ENCODE measurements at regions of chr2 and their contacts with region 1.

Region 1: DNA sequence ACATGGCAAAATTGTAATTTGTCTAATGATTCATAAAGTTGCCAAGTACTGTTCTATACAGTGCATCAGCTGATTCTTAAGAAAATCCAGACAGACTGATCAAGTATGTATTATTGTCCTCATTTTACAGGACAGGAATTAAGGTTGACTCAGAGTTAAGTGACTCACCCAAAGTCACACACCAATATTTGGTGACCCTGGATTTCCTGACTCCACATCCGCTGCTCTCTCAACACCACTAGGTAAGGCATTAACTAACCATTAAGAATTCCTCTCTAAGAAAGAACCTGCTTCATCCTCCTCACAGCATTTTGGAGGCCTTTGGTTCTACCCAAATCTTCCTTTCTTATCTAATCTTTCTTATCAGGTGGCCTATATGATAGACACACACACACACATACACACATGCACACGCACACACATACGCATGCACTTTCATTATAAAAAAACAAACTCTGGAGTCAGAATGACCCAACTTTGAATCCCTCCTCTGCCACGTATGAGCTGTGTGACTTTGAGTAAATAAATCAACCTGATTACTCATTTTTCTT is 150.8 kb downstream of the ANKRD44 start:
- DNase-seq: no peak
- H3K4me3 Mint-ChIP-seq: no peak overlapping the region
- H3K27ac Mint-ChIP-seq: peak overlapping the region; percentile 78
- H3K4me1 Mint-ChIP-seq: peaks cover 59% of the 10 kb centered on the region
- H3K27me3 Mint-ChIP-seq: no peaks in the 10 kb centered on the region

Region 2: GRCh38 chr2:197130318-197130717 is 29.4 kb before region 1 on chr2:
- intact Hi-C with region 1: loop called (anchors 1 kb)
- DNase-seq: no peak
- H3K4me3 Mint-ChIP-seq: peak overlapping the region; percentile 11
- H3K27ac Mint-ChIP-seq: peak overlapping the region; percentile 86
- H3K4me1 Mint-ChIP-seq: peaks cover 63% of the 10 kb centered on the region
- H3K27me3 Mint-ChIP-seq: no peaks in the 10 kb centered on the region

Region 3: GRCh38 chr2:197145471-197146138 is 14.1 kb before region 1 on chr2:
- intact Hi-C with region 1: loop called (anchors 2 kb)
- DNase-seq: no peak
- H3K4me3 Mint-ChIP-seq: no peak overlapping the region
- H3K27ac Mint-ChIP-seq: peak overlapping the region; percentile 80
- H3K4me1 Mint-ChIP-seq: peaks cover 58% of the 10 kb centered on the region
- H3K27me3 Mint-ChIP-seq: no peaks in the 10 kb centered on the region